Mammary epithelial cell (primary cell): ENCODE measurements at regions of chr2 and their contacts with region 1.

Region 1: DNA sequence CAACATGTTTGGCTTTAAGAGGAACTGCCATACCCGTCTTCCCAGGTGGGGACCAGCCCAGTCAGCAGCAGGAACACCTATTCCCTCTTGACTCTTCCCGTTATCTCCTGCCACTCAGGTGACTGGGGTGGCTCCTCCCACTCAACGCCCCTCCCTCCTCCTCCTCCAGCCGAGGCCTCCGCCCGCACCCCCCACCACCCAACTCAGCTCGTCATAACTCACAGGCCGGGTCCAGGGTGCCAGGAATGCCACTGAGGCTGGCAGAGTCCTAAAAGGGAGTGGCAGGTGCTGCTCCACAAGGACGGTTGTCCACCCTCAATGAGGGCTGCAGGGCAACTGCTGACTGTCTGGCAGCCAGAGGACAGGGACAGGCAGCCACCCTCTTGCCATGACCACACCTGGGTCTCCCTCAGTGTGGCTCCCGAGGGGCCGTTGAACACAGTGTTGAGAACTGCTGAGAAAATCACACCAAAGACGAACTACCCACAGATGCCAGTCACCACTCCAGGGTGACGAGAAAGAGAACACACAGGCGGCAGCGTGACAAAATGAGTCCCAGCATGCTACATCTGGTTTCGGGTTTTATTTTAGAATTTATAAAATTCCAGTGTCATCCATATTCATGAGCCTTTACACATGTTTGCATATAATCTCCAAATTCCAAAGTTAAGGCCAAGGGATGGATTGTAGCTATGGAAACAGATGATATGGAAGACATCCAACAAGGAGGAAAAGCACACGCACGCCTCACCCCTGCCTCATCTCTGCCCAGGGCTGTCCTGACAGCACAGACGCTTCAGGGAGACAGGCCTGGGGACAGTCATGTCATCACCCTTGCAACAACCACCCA is 38.5 kb downstream of the ANO7 start:
- DNase-seq: no peak
- H3K4me3 ChIP-seq: no peak overlapping the region
- H3K27ac ChIP-seq: no peak overlapping the region
- H3K4me1 ChIP-seq: peaks cover 15% of the 10 kb centered on the region
- H3K27me3 ChIP-seq: no peaks in the 10 kb centered on the region
- CTCF ChIP-seq: no peak

Region 2: GRCh38 chr2:240832205-240832727 is 394.7 kb before region 1 on chr2:
- CTCF ChIA-PET with region 1: no interaction called
- dilution Hi-C with region 1: no loop called
- in situ Hi-C with region 1: no loop called
- intact Hi-C with region 1: no loop called
- DNase-seq: peak; percentile 84
- H3K4me3 ChIP-seq: peak overlapping the region in 1 of 3 experiments; percentile 16
- H3K27ac ChIP-seq: no peak overlapping the region
- H3K4me1 ChIP-seq: peaks cover 6% of the 10 kb centered on the region
- H3K27me3 ChIP-seq: peaks cover 5% of the 10 kb centered on the region
- CTCF ChIP-seq: no peak

Region 3: GRCh38 chr2:241135737-241136136 is 91.2 kb before region 1 on chr2:
- CTCF ChIA-PET with region 1: no interaction called
- dilution Hi-C with region 1: loop called (anchors 5 kb)
- in situ Hi-C with region 1: no loop called
- intact Hi-C with region 1: no loop called
- DNase-seq: no peak
- H3K4me3 ChIP-seq: no peak overlapping the region
- H3K27ac ChIP-seq: no peak overlapping the region
- H3K4me1 ChIP-seq: no peaks in the 10 kb centered on the region
- H3K27me3 ChIP-seq: no peaks in the 10 kb centered on the region
- CTCF ChIP-seq: no peak

Region 4: DNA sequence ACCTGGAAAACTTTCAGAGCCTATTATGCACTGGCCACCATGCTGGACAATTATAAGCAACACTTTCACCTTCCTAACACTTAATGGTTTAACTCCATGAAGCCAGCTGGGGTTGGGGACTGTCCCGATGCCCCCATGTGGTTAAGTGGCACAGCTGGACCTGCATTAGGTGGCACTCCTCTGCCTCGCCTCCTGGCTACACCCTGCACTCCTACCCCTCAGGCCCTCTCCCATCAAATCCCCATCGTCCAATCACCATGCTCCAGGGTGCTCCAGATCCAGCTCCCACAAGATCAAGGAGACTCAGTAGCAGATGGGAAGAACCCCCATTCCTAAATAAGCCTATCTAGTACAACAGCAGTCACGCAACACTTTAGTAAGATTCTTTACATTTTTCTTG is 34.7 kb after region 1 on chr2:
- CTCF ChIA-PET with region 1: no interaction called
- dilution Hi-C with region 1: loop called (anchors 5 kb)
- in situ Hi-C with region 1: no loop called
- intact Hi-C with region 1: no loop called
- DNase-seq: no peak
- H3K4me3 ChIP-seq: no peak overlapping the region
- H3K27ac ChIP-seq: no peak overlapping the region
- H3K4me1 ChIP-seq: no peaks in the 10 kb centered on the region
- H3K27me3 ChIP-seq: no peaks in the 10 kb centered on the region
- CTCF ChIP-seq: no peak

Region 5: GRCh38 chr2:241271641-241272297 is 44.8 kb after region 1 on chr2:
- CTCF ChIA-PET with region 1: no interaction called
- dilution Hi-C with region 1: no loop called
- in situ Hi-C with region 1: no loop called
- intact Hi-C with region 1: no loop called
- DNase-seq: peak; percentile 75
- H3K4me3 ChIP-seq: peak overlapping the region; percentile 60 to 74 (median 61)
- H3K27ac ChIP-seq: peak overlapping the region; percentile 56
- H3K4me1 ChIP-seq: peaks cover 31% of the 10 kb centered on the region
- H3K27me3 ChIP-seq: no peaks in the 10 kb centered on the region
- CTCF ChIP-seq: no peak